Sigmoid colon (tissue), 7 donors: ENCODE measurements at regions of chr7 and their contacts with region 1.

Region 1: GRCh38 chr7:159030490-159031134 is 114.1 kb downstream of the VIPR2 start:
- DNase-seq: peak; percentile 83
- H3K4me3 ChIP-seq: peak overlapping the region; percentile 43 to 60 (median 52)
- H3K27ac ChIP-seq: peak overlapping the region; percentile 53 to 75 (median 66)
- H3K4me1 ChIP-seq: peaks cover 0 to 20% (median 10%) of the 10 kb centered on the region in 4 donors
- H3K27me3 ChIP-seq: no peaks in the 10 kb centered on the region
- CTCF ChIP-seq: peak; percentile 30 to 47 (median 35)
- EP300 ChIP-seq: no peak
- POLR2A ChIP-seq: no peak

Region 2: DNA sequence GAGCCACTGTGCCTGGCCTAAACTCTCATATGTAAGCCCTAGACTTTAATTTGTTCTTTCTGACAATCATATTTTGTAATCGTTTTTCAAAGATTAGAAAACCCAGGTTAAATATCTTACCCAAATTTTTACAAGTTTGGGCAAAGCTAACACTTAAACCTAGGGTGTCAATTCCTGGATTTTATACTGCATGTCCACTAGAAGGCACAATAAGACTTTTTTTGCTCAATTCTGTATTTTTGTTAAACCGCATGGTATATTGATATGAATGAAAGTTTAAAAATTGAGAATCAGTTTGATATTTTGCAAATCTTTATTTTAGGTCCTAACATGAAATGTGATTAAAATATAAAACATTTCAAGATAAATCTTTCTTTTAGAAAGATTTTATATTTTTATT is 145.0 kb before region 1 on chr7:
- intact Hi-C with region 1: no loop called
- DNase-seq: no peak
- H3K4me3 ChIP-seq: no peak overlapping the region
- H3K27ac ChIP-seq: no peak overlapping the region
- H3K4me1 ChIP-seq: no peaks in the 10 kb centered on the region
- H3K27me3 ChIP-seq: no peaks in the 10 kb centered on the region
- CTCF ChIP-seq: no peak
- EP300 ChIP-seq: no peak
- POLR2A ChIP-seq: no peak

Region 3: DNA sequence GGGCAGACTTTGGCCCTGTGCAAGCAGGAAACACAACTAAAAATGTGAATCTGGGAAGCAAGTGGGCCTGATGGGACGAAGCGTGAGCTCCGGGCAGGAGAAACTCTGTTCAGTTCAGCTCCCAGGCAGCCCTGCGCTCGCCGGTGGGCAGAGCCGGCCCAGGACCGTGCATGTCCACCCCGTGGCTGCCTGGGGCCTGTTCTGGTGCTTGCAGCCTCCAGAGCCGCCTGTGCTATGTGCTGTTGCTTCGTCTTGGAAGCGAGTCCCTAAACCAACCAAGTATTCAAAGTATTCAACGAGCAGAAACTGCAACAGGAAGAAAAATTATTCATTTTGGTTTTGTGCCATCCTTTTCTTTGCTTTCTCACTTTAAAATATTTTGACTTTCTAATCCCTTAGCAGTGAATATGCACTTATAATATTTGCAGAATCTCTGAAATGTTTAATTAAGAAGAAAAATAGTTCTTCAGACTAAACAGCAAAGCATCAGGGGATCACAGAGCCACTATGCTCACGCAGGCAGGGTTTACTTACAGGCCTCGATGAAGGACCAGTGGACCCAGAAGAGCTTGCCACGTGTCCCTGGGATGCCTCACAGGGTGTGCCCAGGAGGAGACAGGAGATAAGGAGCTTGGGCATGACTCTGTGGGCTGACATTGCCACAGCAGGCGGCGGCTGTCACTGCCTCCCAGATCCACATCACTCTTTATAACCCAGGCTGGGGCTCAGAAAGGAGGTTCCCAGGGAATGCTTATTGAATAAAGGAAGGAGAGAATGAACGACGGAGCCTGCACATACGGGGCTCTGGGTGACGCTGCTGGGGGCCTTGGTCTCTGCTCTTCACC is 68.4 kb after region 1 on chr7:
- intact Hi-C with region 1: no loop called
- DNase-seq: peak; percentile 75
- H3K4me3 ChIP-seq: no peak overlapping the region
- H3K27ac ChIP-seq: peak overlapping the region; percentile 67 to 87 (median 76)
- H3K4me1 ChIP-seq: peaks cover 0 to 50% (median 30%) of the 10 kb centered on the region in 4 donors
- H3K27me3 ChIP-seq: no peaks in the 10 kb centered on the region
- CTCF ChIP-seq: no peak
- EP300 ChIP-seq: no peak
- POLR2A ChIP-seq: no peak

Region 4: GRCh38 chr7:159143780-159144757 is 113.5 kb after region 1 on chr7:
- intact Hi-C with region 1: loop called (anchors 5 kb)
- DNase-seq: no peak
- H3K4me3 ChIP-seq: peak overlapping the region; percentile 59 to 82 (median 64)
- H3K27ac ChIP-seq: peak overlapping the region; percentile 69 to 87 (median 76)
- H3K4me1 ChIP-seq: peaks cover 0 to 44% (median 22%) of the 10 kb centered on the region in 4 donors
- H3K27me3 ChIP-seq: peaks cover 6 to 29% (median 21%) of the 10 kb centered on the region in 3 donors
- CTCF ChIP-seq: no peak
- EP300 ChIP-seq: no peak
- POLR2A ChIP-seq: no peak